Right ventricle myocardium inferior (tissue), 1 donor: ENCODE measurements at regions of chr3 and their contacts with region 1.

Region 1: DNA sequence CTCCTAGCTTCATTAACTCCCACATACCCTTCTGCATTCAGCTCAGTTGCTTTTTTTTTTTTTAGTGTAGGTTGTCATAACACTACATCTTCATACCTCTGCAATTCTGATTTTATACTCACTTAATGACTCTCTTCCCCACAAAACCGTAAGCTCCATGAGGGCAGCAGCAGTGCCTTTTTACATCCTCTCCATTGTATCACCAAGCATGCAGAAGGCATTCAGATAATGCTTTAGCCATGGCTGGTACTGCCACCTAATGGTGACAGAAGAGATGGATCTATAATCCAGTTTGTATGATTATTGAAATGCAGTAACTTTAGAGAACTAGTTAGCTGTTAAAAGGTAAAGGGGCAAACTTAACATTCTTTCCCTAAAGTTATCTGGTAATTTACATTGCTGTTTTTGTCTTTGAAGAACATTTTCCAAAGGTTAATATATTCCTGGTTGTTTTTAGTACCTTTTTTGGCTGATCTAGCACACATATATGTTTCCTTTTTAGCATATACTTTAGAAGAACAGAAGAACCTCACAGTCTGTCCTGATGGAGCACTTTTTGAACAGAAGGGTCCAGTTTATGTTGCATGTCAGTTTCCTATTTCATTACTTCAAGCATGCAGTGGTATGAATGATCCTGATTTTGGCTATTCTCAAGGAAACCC is 36.8 kb downstream of the ATP1B3 start:
- DNase-seq: no peak
- ATAC-seq: peak; percentile 65

Region 2: DNA sequence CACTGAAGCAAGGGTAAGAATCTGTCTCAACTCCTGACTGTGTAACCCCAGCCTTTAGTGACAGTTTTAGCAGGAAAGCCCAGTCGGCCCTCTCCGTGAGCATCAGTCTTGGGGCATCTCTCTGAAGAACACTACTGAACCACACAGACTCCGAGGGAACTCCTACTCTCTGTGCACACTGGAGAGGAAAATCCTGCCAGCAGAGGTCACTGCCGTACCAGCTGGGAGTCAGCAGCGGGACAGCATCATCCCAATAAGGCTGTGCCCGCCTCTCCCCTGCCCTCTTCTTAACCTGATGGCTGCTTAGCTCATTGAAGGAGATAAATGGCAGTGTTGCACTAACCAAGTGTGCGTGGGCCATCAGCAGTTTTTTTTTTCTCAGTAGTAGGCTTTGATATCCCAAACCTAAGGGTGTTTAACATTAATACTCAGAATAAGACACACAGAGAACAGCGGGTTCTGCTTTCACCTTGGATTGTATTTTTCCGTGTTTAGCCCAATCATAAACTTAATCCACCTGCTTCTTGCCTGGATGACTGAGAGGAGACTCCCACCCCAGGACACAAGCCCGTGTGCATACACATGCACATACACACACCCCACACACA is 453.1 kb before region 1 on chr3:
- intact Hi-C with region 1: loop called (anchors 5 kb)
- DNase-seq: peak; percentile 92
- ATAC-seq: peak; percentile 95

Region 3: GRCh38 chr3:141575879-141576743 is 337.2 kb before region 1 on chr3:
- intact Hi-C with region 1: loop called (anchors 5 kb)
- DNase-seq: no peak
- ATAC-seq: no peak

Region 4: GRCh38 chr3:141782454-141782853 is 130.8 kb before region 1 on chr3:
- intact Hi-C with region 1: loop called (anchors 5 kb)
- DNase-seq: no peak
- ATAC-seq: no peak

Region 5: DNA sequence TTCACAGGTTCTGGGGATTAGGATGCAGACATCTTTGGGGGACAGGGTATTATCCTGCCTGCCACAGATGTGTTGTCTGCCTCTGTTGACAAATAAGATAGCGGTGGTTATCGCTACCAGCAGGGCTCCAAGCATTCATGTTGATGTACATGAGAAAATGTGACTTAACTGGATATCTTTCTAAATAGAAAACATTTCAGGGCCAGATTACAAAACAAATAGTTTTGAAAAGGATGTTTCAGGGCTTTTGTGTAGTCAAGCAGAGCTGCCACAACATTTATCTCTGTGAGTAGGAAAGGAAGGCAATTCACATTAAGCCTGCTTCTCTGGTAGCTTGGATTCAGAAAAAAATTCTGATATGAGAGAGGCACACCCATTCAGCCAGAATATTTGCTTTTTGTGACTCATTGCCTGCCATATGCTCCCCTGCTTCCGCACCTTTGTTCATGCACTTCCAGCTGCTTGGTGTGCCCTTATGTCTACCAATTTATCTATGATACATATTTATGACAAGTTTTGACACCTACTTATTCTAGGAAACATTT is 705.7 kb after region 1 on chr3:
- intact Hi-C with region 1: no loop called
- DNase-seq: no peak
- ATAC-seq: no peak